ENCODE measurements at regions of chr3 and their contacts with region 1.

Region 1: GRCh38 chr3:190119461-190120268 is 1.0 kb downstream of the P3H2 start:
- DNase-seq: no peak
- ATAC-seq: no peak
- H3K4me3 ChIP-seq: no peak overlapping the region
- H3K4me3 Mint-ChIP-seq: peak overlapping the region; percentile 29 to 80 (median 50)
- H3K27ac ChIP-seq: no peak overlapping the region
- H3K27ac Mint-ChIP-seq: no peak overlapping the region
- H3K4me1 ChIP-seq: peaks cover 0 to 5% of the 10 kb centered on the region in 2 experiments
- H3K4me1 Mint-ChIP-seq: peaks cover 6 to 10% (median 9%) of the 10 kb centered on the region in 3 donors
- H3K27me3 ChIP-seq: peaks cover 5 to 29% of the 10 kb centered on the region in 2 experiments
- H3K27me3 Mint-ChIP-seq: peaks cover 47 to 54% of the 10 kb centered on the region in 2 donors

Region 2: GRCh38 chr3:190038050-190038933 is 81.4 kb before region 1 on chr3:
- CTCF ChIA-PET with region 1: no interaction called
- POLR2A ChIA-PET with region 1: interaction called in 1 of 2 experiments, 12 read pairs
- DNase-seq: no peak
- ATAC-seq: no peak
- H3K4me3 ChIP-seq: no peak overlapping the region
- H3K4me3 Mint-ChIP-seq: no peak overlapping the region
- H3K27ac ChIP-seq: no peak overlapping the region
- H3K27ac Mint-ChIP-seq: no peak overlapping the region
- H3K4me1 ChIP-seq: no peaks in the 10 kb centered on the region
- H3K4me1 Mint-ChIP-seq: no peaks in the 10 kb centered on the region
- H3K27me3 ChIP-seq: no peaks in the 10 kb centered on the region
- H3K27me3 Mint-ChIP-seq: peaks cover 2 to 16% of the 10 kb centered on the region in 2 donors

Region 3: DNA sequence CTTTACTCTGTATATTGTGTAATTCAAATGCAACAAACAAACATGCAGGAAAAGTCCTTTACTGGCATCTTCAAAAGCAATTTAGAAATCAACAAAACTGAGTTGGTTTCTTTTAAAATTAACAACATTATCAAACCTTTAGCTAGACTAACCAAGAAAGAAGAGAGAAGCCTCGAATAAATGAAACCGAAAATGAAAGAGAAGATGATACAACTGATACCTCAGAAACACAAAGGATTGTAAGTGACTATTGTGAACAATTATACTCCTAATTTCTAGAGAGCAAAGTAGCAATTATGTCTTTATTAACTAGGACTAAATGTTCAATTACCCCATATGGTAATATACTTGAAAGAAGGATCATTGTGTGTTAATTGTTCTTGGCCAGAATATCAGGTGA is 50.2 kb after region 1 on chr3:
- CTCF ChIA-PET with region 1: no interaction called
- POLR2A ChIA-PET with region 1: no interaction called
- DNase-seq: peak in 1 of 35 experiments; percentile 9
- ATAC-seq: peak in 1 of 4 experiments; percentile 51
- H3K4me3 ChIP-seq: no peak overlapping the region
- H3K4me3 Mint-ChIP-seq: peak overlapping the region; percentile 46 to 79 (median 70)
- H3K27ac ChIP-seq: no peak overlapping the region
- H3K27ac Mint-ChIP-seq: peak overlapping the region; percentile 52 to 69
- H3K4me1 ChIP-seq: no peaks in the 10 kb centered on the region
- H3K4me1 Mint-ChIP-seq: peaks cover 11 to 23% (median 15%) of the 10 kb centered on the region in 3 donors
- H3K27me3 ChIP-seq: no peaks in the 10 kb centered on the region
- H3K27me3 Mint-ChIP-seq: peaks cover 3 to 4% of the 10 kb centered on the region in 2 donors

Region 4: GRCh38 chr3:190339130-190339529 is 219.5 kb after region 1 on chr3:
- CTCF ChIA-PET with region 1: no interaction called
- POLR2A ChIA-PET with region 1: interaction called in 1 of 2 experiments, 10 read pairs
- DNase-seq: no peak
- ATAC-seq: no peak
- H3K4me3 ChIP-seq: no peak overlapping the region
- H3K4me3 Mint-ChIP-seq: no peak overlapping the region
- H3K27ac ChIP-seq: no peak overlapping the region
- H3K27ac Mint-ChIP-seq: no peak overlapping the region
- H3K4me1 ChIP-seq: no peaks in the 10 kb centered on the region
- H3K4me1 Mint-ChIP-seq: peaks cover 0 to 6% (median 0%) of the 10 kb centered on the region in 3 donors
- H3K27me3 ChIP-seq: no peaks in the 10 kb centered on the region
- H3K27me3 Mint-ChIP-seq: peaks cover 7% of the 10 kb centered on the region in 2 donors